Activated B cell treated with CpG ODN at 0.5 μM for 24 hours (primary cell): ENCODE measurements at regions of chr20 and their contacts with region 1.

Region 1: GRCh38 chr20:63520504-63520933 is at the start of gene PPDPF:
- DNase-seq: peak; percentile 84
- ATAC-seq: peak; percentile 81
- H3K4me3 Mint-ChIP-seq: peak within 1 kb of the TSS; percentile 81
- H3K27ac Mint-ChIP-seq: peak within 1 kb of the TSS; percentile 61
- H3K4me1 Mint-ChIP-seq: peaks cover 33% of the 10 kb centered on the region
- H3K27me3 Mint-ChIP-seq: no peaks in the 10 kb centered on the region
- CTCF ChIP-seq: no peak
- total RNA-seq, gene PPDPF: 170 and 172 TPM in 2 replicates

Region 2: DNA sequence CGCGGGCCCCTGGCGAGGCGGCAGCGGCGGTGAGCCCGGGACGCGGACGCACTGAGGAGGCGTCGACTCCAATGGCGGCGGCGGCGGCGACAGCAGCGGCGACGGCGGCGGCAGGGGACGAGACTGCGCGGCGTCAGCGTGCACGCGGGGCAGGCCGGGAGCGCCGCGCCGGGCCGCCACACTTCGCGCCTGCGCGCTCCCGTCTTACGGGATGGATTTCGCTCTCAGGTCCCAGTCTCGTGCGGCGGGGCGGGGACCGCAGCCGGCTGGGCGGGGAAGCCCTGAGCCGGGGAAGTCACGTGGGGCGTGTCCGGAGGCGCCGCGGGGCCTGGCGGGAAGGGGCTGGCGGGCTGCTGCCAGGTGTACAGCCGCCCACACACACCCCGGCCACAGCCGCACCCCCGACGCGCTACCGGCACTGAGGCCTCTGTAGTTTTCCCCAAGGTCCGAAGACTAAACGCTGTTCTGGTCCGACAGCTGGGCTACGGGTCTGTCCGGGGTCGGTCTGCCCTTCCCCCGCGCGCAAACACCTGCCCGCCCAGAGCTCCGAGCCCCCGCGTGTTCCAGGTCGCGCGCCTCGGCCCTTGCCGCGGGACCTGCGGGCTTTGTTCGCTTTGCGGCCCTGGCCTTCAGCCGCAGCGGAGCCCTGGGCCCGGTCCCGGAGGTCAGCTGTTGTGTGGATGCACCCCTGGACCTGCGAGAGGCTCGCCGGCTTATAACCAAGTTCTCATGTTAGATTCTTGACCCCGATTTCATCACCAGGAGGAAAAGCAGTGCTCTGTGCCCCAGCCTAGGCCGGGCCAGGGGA is 304.3 kb before region 1 on chr20 and contains the start of gene YTHDF1:
- CTCF ChIA-PET with region 1: no interaction called
- POLR2A ChIA-PET with region 1: no interaction called
- intact Hi-C with region 1: no loop called
- DNase-seq: peak; percentile 96
- ATAC-seq: peak; percentile 87
- H3K4me3 Mint-ChIP-seq: peak within 1 kb of the TSS; percentile 89
- H3K27ac Mint-ChIP-seq: peak within 1 kb of the TSS; percentile 84
- H3K4me1 Mint-ChIP-seq: peaks cover 40% of the 10 kb centered on the region
- H3K27me3 Mint-ChIP-seq: peaks cover 4% of the 10 kb centered on the region
- CTCF ChIP-seq: no peak
- total RNA-seq, gene YTHDF1: 32.6 and 34.1 TPM in 2 replicates

Region 3: GRCh38 chr20:63434599-63435378 is 85.7 kb before region 1 on chr20:
- CTCF ChIA-PET with region 1: no interaction called
- POLR2A ChIA-PET with region 1: interaction called, 3 read pairs
- intact Hi-C with region 1: loop called (anchors 1 kb)
- DNase-seq: peak; percentile 43
- ATAC-seq: peak; percentile 73
- H3K4me3 Mint-ChIP-seq: peak overlapping the region; percentile 37
- H3K27ac Mint-ChIP-seq: peak overlapping the region; percentile 32
- H3K4me1 Mint-ChIP-seq: peaks cover 12% of the 10 kb centered on the region
- H3K27me3 Mint-ChIP-seq: peaks cover 14% of the 10 kb centered on the region
- CTCF ChIP-seq: peak; percentile 32

Region 4: DNA sequence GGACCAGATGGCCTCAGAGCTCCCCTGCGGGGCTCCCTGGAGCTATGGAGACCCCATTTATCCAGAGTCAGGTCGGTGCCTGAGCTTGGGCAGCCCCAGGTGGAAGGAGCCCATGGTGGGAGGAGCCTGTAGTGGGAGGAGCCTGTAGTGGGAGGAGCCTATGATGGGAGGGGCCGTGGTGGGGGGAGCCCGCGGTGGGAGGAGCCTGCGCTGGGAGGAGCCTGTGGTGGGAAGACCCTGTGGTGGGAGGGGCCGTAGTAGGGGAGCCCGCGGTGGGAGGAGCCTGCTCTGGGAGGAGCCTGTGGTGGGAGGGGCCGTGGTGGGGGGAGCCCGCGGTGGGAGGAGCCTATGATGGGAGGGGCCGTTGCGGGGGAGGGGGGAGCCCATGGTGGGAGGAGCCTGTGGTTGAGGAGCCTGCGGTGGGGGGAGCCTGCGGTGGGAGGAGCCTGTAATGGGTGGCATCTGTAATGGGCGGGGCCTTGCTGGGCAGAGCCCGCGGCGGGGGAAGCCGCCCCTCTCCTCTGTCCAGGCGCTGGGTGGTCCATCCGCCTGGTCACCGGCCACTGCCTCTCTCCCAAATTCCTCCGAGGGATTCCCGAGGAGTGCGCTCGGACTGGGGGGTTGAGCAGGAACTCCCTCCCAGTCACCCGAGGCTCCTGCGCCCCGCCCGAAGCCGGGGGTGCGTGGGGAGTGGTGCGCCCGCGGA is 32.9 kb after region 1 on chr20:
- CTCF ChIA-PET with region 1: no interaction called
- POLR2A ChIA-PET with region 1: interaction called, 9 read pairs
- intact Hi-C with region 1: loop called (anchors 1 kb)
- DNase-seq: peak; percentile 86
- ATAC-seq: peak; percentile 78
- H3K4me3 Mint-ChIP-seq: peak overlapping the region; percentile 84
- H3K27ac Mint-ChIP-seq: peak overlapping the region; percentile 82
- H3K4me1 Mint-ChIP-seq: peaks cover 50% of the 10 kb centered on the region
- H3K27me3 Mint-ChIP-seq: no peaks in the 10 kb centered on the region
- CTCF ChIP-seq: no peak

Region 5: DNA sequence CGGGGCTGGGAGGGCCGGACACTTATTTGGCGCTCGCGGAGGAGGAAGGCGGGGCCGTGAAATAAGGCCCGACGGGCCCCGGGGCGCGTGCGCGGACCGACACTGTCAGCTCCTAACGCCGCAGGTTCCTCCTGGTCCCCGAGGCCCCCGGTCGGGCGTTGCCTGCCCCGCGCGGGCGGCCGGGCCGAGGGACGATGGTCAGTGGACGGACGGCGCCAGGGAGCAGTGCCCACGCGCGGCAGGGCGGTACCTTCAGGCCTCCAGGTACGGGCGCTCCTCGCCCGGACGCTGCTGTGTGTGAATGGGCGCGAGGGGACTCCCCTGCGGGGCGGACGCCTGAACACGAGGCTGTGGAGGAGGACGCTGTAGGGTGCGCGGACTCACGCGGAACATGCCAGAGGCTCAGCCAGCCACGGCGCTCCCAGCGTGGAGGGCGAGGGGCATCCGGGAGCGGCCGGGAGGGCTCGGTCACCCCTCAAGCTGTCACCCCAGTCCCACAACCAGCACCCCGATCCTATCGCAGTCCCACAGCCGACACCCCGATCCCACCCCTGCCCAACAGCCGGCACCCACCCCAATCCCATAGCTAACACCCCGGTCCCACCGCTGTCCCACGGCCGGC is 106.7 kb after region 1 on chr20:
- CTCF ChIA-PET with region 1: no interaction called
- POLR2A ChIA-PET with region 1: interaction called, 13 read pairs
- intact Hi-C with region 1: no loop called
- DNase-seq: peak; percentile 97
- ATAC-seq: peak; percentile 77
- H3K4me3 Mint-ChIP-seq: peak overlapping the region; percentile 91
- H3K27ac Mint-ChIP-seq: peak overlapping the region; percentile 93
- H3K4me1 Mint-ChIP-seq: peaks cover 45% of the 10 kb centered on the region
- H3K27me3 Mint-ChIP-seq: no peaks in the 10 kb centered on the region
- CTCF ChIP-seq: no peak

Region 6: DNA sequence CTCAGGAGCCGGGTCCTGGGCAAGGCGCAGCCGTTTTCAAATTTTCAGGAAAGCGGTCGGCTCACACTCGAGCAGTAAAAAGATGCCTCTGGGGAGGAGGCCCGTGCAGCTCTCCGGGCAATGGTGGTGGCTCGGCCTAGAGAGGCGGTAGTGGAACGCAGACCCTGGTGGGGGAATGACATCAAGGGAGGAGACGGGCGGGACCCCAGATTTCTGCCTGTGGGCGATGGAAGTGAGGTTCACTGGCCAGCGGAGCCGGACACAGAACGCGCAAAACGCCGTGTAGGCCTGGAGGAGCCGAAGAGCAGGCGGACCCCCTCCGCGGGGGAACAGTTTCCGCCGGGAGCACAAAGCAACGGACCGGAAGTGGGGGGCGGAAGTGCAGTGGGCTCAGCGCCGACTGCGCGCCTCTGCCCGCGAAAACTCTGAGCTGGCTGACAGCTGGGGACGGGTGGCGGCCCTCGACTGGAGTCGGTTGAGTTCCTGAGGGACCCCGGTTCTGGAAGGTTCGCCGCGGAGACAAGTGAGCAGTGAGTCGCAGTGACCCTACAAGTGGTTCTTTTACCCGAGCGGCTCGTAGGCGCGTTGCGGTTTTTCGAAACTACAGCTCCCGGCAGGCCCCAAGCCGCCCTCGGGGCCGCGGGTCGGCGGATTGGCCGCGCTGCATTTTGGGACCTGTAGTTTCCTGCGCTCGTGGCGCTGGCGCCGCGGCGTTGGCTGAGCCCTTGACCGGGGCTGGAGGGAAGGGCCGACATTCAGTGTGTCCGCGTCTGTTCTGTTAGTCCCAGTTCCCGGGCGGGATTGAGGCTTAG is 137.6 kb after region 1 on chr20 and contains the start of gene RTEL1:
- CTCF ChIA-PET with region 1: no interaction called
- POLR2A ChIA-PET with region 1: interaction called, 13 read pairs
- intact Hi-C with region 1: loop called (anchors 1 kb)
- DNase-seq: peak; percentile 95
- ATAC-seq: peak; percentile 88
- H3K4me3 Mint-ChIP-seq: peak within 1 kb of the TSS; percentile 97
- H3K27ac Mint-ChIP-seq: peak within 1 kb of the TSS; percentile 93
- H3K4me1 Mint-ChIP-seq: peaks cover 27% of the 10 kb centered on the region
- H3K27me3 Mint-ChIP-seq: peaks cover 3% of the 10 kb centered on the region
- CTCF ChIP-seq: no peak
- total RNA-seq, gene RTEL1: 24.1 and 33.8 TPM in 2 replicates

Region 7: GRCh38 chr20:63955827-63956663 is 435.5 kb after region 1 on chr20 and contains the start of gene UCKL1:
- CTCF ChIA-PET with region 1: no interaction called
- POLR2A ChIA-PET with region 1: interaction called, 8 read pairs
- intact Hi-C with region 1: loop called (anchors 1 kb)
- DNase-seq: peak; percentile 87
- ATAC-seq: peak; percentile 78
- H3K4me3 Mint-ChIP-seq: peak within 1 kb of the TSS; percentile 87
- H3K27ac Mint-ChIP-seq: peak within 1 kb of the TSS; percentile 85
- H3K4me1 Mint-ChIP-seq: peaks cover 49% of the 10 kb centered on the region
- H3K27me3 Mint-ChIP-seq: no peaks in the 10 kb centered on the region
- CTCF ChIP-seq: no peak
- total RNA-seq, gene UCKL1: 43.6 and 49.7 TPM in 2 replicates

Region 8: GRCh38 chr20:63980806-63981728 is 460.5 kb after region 1 on chr20 and contains the start of gene PRPF6:
- CTCF ChIA-PET with region 1: no interaction called
- POLR2A ChIA-PET with region 1: interaction called, 15 read pairs
- intact Hi-C with region 1: loop called (anchors 1 kb)
- DNase-seq: peak; percentile 90
- ATAC-seq: peak; percentile 65
- H3K4me3 Mint-ChIP-seq: peak within 1 kb of the TSS; percentile 92
- H3K27ac Mint-ChIP-seq: peak within 1 kb of the TSS; percentile 94
- H3K4me1 Mint-ChIP-seq: peaks cover 50% of the 10 kb centered on the region
- H3K27me3 Mint-ChIP-seq: no peaks in the 10 kb centered on the region
- CTCF ChIP-seq: peak; percentile 25
- total RNA-seq, gene PRPF6: 75.7 and 75.8 TPM in 2 replicates